Calu3 (cell line): ENCODE measurements at regions of chr11 and their contacts with region 1.

Region 1: DNA sequence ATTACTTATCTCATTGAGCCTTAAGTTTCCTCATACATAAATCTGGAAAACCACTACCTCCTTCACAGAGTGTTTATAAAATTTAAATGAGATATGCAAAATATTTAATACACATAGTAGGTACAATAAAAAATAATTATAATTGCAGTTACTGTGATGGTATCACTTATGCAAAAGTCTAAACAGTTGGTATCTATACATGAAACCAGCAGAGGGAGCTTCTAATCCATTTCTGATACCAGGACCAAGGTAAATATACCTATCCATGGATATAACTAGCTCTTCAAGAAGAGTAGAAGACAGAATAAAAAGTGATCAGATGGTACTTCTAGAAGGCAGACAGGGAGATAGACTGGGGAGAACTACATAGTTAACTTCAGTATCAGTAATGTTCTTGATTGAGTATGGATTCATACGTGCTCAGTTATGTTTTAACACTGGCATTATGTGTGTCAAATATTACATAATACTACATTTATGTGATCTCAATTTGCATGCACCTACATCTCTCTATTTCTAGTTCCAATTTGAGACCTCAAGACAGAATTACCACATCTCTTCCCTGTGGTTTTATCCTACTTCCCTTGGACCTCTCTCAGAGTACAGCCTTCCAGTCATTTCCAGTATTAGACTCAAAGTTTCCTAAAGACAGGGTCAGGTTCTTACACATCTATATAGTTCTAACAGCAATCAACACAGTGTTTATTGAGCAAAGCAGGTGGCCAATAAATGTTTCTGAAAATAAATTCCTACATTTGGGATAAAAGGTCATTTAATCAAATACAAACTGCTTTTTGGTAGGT is 13.7 kb upstream of the TSG101 start:
- DNase-seq: no peak
- H3K4me3 Mint-ChIP-seq: no peak overlapping the region
- H3K27ac Mint-ChIP-seq: no peak overlapping the region
- H3K4me1 Mint-ChIP-seq: no peaks in the 10 kb centered on the region
- H3K27me3 Mint-ChIP-seq: no peaks in the 10 kb centered on the region
- CTCF ChIP-seq: no peak

Region 2: GRCh38 chr11:18634140-18635032 is 94.0 kb after region 1 on chr11 and contains the start of gene SPTY2D1:
- CTCF ChIA-PET with region 1: no interaction called
- intact Hi-C with region 1: no loop called
- DNase-seq: peak; percentile 97
- H3K4me3 Mint-ChIP-seq: peak within 1 kb of the TSS; percentile 82
- H3K27ac Mint-ChIP-seq: peak within 1 kb of the TSS; percentile 95
- H3K4me1 Mint-ChIP-seq: no peaks in the 10 kb centered on the region
- H3K27me3 Mint-ChIP-seq: no peaks in the 10 kb centered on the region
- CTCF ChIP-seq: no peak
- total RNA-seq, gene SPTY2D1: 32.1 and 37.5 TPM in 2 replicates

Region 3: GRCh38 chr11:18650859-18651557 is 110.6 kb after region 1 on chr11:
- CTCF ChIA-PET with region 1: no interaction called
- intact Hi-C with region 1: loop called (anchors 2 kb)
- DNase-seq: peak; percentile 36
- H3K4me3 Mint-ChIP-seq: no peak overlapping the region
- H3K27ac Mint-ChIP-seq: no peak overlapping the region
- H3K4me1 Mint-ChIP-seq: no peaks in the 10 kb centered on the region
- H3K27me3 Mint-ChIP-seq: no peaks in the 10 kb centered on the region
- CTCF ChIP-seq: peak; percentile 43

Region 4: GRCh38 chr11:18721561-18722292 is 181.3 kb after region 1 on chr11:
- CTCF ChIA-PET with region 1: interaction called, 16 read pairs
- intact Hi-C with region 1: no loop called
- DNase-seq: peak; percentile 76
- H3K4me3 Mint-ChIP-seq: peak overlapping the region; percentile 90
- H3K27ac Mint-ChIP-seq: peak overlapping the region; percentile 10
- H3K4me1 Mint-ChIP-seq: peaks cover 16% of the 10 kb centered on the region
- H3K27me3 Mint-ChIP-seq: peaks cover 22% of the 10 kb centered on the region
- CTCF ChIP-seq: peak; percentile 75

Region 5: GRCh38 chr11:18768472-18768901 is 228.1 kb after region 1 on chr11:
- CTCF ChIA-PET with region 1: interaction called, 12 read pairs
- intact Hi-C with region 1: loop called (anchors 1 kb)
- DNase-seq: no peak
- H3K4me3 Mint-ChIP-seq: no peak overlapping the region
- H3K27ac Mint-ChIP-seq: no peak overlapping the region
- H3K4me1 Mint-ChIP-seq: peaks cover 24% of the 10 kb centered on the region
- H3K27me3 Mint-ChIP-seq: peaks cover 19% of the 10 kb centered on the region
- CTCF ChIP-seq: no peak